ENCODE measurements at regions of chr3 and their contacts with region 1.

Region 1: DNA sequence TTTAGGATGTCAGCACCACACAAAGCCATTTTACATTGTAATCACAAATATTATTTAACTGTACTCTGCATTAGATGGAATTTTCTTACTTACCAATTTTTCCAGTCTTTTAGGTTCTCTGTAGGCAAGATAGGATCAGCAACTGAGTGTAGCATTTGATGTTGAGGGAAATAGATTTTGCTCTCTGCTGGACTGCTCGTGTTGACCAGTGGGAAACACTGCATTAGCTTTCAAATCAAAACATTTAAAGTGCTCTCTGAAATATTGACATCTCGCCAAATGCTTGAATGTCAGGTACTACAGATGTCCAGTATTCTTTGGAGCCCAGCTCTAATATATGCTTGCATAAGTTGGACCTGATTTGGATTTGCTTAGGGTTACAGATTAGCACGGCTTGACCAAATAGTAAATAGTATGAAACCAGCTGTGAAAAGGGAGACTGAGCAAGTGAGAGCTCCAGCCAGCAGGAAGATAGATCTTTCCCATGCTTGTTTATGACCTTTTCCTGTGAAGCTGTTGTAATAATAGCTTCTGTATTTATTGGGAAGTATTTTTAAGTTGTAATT is 29.5 kb downstream of the P2RY14 start:
- DNase-seq: no peak
- H3K4me3 Mint-ChIP-seq: no peak overlapping the region
- H3K27ac Mint-ChIP-seq: no peak overlapping the region
- H3K4me1 Mint-ChIP-seq: no peaks in the 10 kb centered on the region
- H3K27me3 Mint-ChIP-seq: peaks cover 31% of the 10 kb centered on the region

Region 2: GRCh38 chr3:151265866-151266265 is 17.0 kb after region 1 on chr3:
- intact Hi-C with region 1: loop called (anchors 2 kb)
- DNase-seq: no peak
- H3K4me3 Mint-ChIP-seq: no peak overlapping the region
- H3K27ac Mint-ChIP-seq: no peak overlapping the region
- H3K4me1 Mint-ChIP-seq: peaks cover 66% of the 10 kb centered on the region
- H3K27me3 Mint-ChIP-seq: peaks cover 5% of the 10 kb centered on the region

Measured in activated T-helper 1 cell treated with anti-CD3 and anti-CD28 coated beads, Interleukin-12 subunit alpha, Interleukin-12 subunit beta, Interleukin-2, Interleukin-4 antibody, amounts not matched to agents 30 ng/mL and 10 ng/mL and 1 ng/mL, durations not matched to agents 14 hours and 24 hours and 36 hours (primary cell).